Motor neuron (in vitro differentiated cells): ENCODE measurements at regions of chr3 and their contacts with region 1.

Region 1: DNA sequence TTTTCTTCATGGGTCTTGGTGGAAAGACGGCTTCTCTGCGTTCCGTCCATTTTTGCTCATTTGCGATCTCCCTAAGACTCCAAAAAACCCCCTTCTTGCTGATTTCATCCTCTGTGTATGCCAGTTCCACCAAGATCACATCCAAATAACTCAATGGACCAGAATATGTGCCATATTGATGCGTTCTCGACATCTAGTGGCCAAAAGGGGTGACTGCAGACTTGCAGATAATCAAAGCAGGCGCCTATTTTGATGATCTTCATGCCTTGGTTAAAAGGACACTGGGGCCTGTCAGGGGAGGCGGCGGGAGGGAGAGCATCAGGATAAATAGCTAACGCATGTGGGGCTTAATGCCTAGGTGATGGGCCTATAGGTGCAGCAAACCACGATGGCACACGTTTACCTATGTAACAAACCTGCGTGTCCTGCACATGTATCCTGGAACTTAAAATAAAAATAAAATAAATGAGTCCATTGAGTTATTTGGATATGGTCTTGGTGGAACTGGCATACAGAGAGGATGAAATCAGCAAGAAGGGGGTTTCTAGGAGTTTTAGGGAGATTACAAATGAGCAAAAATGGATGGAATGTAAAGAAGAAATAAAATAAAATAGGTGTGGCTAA is 104.2 kb upstream of the RAD18 start:
- ATAC-seq: peak in 6 of 8 experiments; percentile 34 to 80 (median 56)
- H3K4me3 ChIP-seq: no peak overlapping the region
- H3K27ac ChIP-seq: no peak overlapping the region
- H3K4me1 ChIP-seq: peaks cover 0 to 11% of the 10 kb centered on the region in 2 donors

Region 2: DNA sequence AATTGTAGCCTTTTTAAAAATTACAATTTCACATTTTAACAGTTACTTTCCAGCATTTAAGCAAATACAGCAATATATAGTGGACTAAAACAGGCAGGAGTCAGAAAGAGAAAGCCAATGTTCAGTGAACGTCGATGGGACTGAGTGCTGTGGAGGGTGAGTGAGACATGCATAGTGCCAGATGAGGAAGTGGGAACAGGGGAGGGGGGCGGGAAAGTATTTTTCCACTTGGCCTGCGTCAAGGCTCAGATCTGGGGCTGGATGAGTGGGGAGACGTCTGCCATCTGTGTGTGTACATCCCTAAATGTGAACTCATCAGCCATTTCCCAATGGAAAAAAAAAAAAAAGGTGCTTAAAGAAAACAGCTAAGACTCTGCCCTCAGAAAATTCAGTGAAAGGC is 85.0 kb before region 1 on chr3:
- in situ Hi-C with region 1: loop called in 2 of 9 experiments (anchors 5 to 10 kb)
- ATAC-seq: no peak
- H3K4me3 ChIP-seq: no peak overlapping the region
- H3K27ac ChIP-seq: no peak overlapping the region
- H3K4me1 ChIP-seq: peaks cover 0 to 10% of the 10 kb centered on the region in 2 donors

Region 3: DNA sequence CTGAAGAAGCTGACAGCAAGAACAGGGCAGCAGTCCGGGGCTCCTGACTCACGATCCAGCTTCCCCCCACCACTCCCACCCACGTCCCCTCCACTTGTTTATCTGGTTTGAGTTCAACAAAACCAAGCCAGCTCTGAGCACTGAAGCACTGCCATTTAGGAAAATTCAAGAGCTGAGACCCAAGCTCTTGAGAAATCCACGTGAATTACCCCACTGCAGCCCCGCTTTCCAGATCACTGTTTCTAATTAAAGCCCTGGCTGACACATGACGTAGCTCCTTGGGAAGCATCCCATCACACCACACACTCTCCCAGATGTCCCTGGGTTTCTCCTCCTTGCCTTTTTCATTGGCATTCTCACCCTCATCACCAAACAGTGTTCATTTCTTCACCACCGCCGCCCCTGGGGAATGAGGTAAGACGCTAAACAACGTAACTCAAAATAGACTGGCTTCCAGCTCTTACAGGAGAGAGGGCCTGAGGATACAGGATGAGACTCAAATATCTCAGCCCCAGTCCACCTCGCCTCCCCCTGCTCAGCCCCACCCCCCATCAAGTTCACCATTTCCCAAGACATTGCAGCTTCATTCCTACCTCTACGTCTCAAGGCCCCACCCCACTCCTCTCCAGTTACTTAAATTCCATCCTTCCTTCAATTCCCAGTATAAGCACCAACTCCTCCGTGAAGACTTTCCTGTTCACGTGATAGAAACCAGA is 86.6 kb after region 1 on chr3:
- in situ Hi-C with region 1: no loop called
- ATAC-seq: peak in 6 of 8 experiments; percentile 22 to 56 (median 51)
- H3K4me3 ChIP-seq: no peak overlapping the region
- H3K27ac ChIP-seq: peak overlapping the region in 1 of 2 donors; percentile 31
- H3K4me1 ChIP-seq: peaks cover 12 to 13% of the 10 kb centered on the region in 2 donors